HAP-1 (cell line): ENCODE measurements at regions of chr17 and their contacts with region 1.

Region 1: GRCh38 chr17:76014184-76014924 is 12.8 kb downstream of the EVPL start:
- DNase-seq: peak; percentile 65 to 89
- H3K4me3 ChIP-seq: no peak overlapping the region
- H3K4me1 ChIP-seq: no peaks in the 10 kb centered on the region
- H3K27me3 ChIP-seq: no peaks in the 10 kb centered on the region

Region 2: DNA sequence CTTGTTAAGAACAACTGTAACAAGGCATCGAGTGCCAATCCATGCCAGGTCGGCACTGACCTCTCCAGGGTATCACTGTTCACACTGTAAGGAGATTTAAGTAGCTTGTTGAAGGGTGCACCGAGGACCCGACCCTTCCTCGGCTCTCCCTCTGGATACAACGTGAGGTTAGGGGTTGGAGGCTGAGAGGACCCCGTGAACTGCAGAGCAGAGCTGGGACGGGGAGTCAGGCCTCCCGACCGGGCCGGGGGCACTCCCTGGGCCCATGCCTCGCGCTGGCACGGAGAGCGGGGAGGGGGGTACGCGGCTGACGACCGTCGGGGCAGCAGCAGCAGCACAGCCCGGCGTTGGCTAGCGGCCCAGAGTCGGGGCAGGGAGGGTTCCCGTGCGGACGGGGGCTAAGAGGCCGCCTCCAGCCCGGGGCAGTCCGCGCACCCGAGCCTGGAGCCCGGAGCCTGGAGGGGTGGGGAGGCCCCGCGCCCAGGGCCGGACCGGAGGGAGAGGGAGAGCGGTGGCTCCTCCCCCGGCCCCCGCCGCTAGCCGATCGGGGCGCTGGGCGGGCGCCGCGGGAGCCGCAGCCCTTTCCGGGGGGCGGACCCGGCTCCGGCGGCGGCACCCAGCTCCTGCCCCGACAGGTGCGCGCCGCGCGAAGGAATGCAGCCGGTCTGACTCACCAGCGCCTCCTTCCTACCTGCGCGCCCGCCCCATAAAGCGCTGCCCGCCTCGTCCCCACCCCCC is 293.5 kb before region 1 on chr17 and contains the start of gene ITGB4:
- in situ Hi-C with region 1: no loop called
- DNase-seq: peak in 1 of 2 experiments; percentile 47
- H3K4me3 ChIP-seq: peak within 1 kb of the TSS; percentile 30
- H3K4me1 ChIP-seq: no peaks in the 10 kb centered on the region
- H3K27me3 ChIP-seq: peaks cover 8% of the 10 kb centered on the region

Region 3: DNA sequence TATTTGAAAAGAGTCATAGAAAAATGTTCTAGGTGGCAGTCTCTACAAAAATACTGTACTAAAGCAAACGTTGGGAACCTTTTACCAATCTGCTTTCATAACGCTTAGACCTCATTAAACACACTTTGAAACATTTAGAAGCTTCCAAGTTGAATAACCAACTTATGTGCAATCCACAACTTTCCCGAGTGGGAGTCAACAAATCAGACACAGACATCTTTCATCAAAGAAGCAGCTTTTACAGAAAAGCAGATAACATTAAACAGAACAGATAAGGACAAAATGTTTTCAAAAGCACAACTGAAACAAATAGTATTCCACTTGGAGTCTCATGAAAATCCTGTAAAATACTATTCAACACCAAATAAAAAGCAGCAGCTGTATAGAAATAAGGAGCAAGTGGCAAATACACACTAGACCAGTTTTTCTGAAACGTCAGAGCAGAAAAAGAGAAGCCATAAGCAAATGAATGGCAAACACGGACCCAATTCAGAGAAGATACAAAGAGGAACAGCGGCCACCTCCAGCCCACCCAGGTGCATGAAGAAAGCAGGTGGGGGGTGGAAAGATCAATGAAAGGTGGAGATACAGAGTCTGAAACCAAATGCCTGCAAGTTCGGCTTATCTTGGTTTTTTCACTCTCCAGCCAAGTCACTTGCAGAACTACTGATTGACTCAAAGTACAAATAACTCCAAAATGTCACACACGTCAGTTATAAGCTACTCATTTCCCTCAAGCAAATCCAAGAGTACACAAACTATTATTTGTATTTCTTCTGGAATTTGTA is 55.1 kb before region 1 on chr17:
- in situ Hi-C with region 1: no loop called
- DNase-seq: no peak
- H3K4me3 ChIP-seq: no peak overlapping the region
- H3K4me1 ChIP-seq: no peaks in the 10 kb centered on the region
- H3K27me3 ChIP-seq: no peaks in the 10 kb centered on the region

Region 4: GRCh38 chr17:76292567-76292966 is 278.2 kb after region 1 on chr17:
- in situ Hi-C with region 1: loop called (anchors 5 kb)
- DNase-seq: no peak
- H3K4me3 ChIP-seq: no peak overlapping the region
- H3K4me1 ChIP-seq: no peaks in the 10 kb centered on the region
- H3K27me3 ChIP-seq: no peaks in the 10 kb centered on the region